ENCODE measurements at regions of chr3 and their contacts with region 1.

Region 1: GRCh38 chr3:112990672-112991602 is at the start of gene GTPBP8:
- DNase-seq: peak; percentile 85
- CTCF ChIP-seq: no peak

Region 2: GRCh38 chr3:113002679-113003078 is 11.7 kb after region 1 on chr3:
- CTCF ChIA-PET with region 1: interaction called, 13 read pairs
- POLR2A ChIA-PET with region 1: no interaction called
- DNase-seq: no peak
- CTCF ChIP-seq: no peak

Region 3: GRCh38 chr3:113019182-113020137 is 28.5 kb after region 1 on chr3:
- CTCF ChIA-PET with region 1: no interaction called
- POLR2A ChIA-PET with region 1: no interaction called
- DNase-seq: peak; percentile 94
- CTCF ChIP-seq: no peak